Astrocyte of the cerebellum (primary cell): ENCODE measurements at regions of chr21 and their contacts with region 1.

Region 1: GRCh38 chr21:34054259-34054658 is 19.1 kb upstream of the MRPS6 start:
- DNase-seq: no peak
- H3K4me3 ChIP-seq: no peak overlapping the region
- CTCF ChIP-seq: no peak

Region 2: GRCh38 chr21:34091607-34092006 is 37.3 kb after region 1 on chr21:
- in situ Hi-C with region 1: loop called (anchors 5 kb)
- DNase-seq: no peak
- H3K4me3 ChIP-seq: no peak overlapping the region
- CTCF ChIP-seq: peak; percentile 57